GM12878 (cell line): ENCODE measurements at regions of chr3 and their contacts with region 1.

Region 1: GRCh38 chr3:186849374-186849975 is 7.0 kb downstream of the ADIPOQ start:
- DNase-seq: peak; percentile 30
- ATAC-seq: peak; percentile 97
- H3K4me3 ChIP-seq: no peak overlapping the region
- H3K27ac ChIP-seq: no peak overlapping the region
- H3K4me1 ChIP-seq: no peaks in the 10 kb centered on the region
- H3K27me3 ChIP-seq: peaks cover 0 to 7% of the 10 kb centered on the region in 2 experiments; a peak in 3 of 4 replicates
- CTCF ChIP-seq: peak; percentile 41 to 72 (median 56); a peak in 5 of 6 replicates
- EP300 ChIP-seq: no peak
- POLR2A ChIP-seq: no peak
- RAD21 ChIP-seq: peak; percentile 84

Region 2: GRCh38 chr3:186985661-186986364 is 136.3 kb after region 1 on chr3:
- CTCF ChIA-PET with region 1: interaction called, 7 read pairs
- POLR2A ChIA-PET with region 1: no interaction called
- RAD21 ChIA-PET with region 1: interaction called, 11 read pairs
- SMC1A ChIA-PET with region 1: interaction called, 5 read pairs
- in situ Hi-C with region 1: no loop called
- intact Hi-C with region 1: no loop called
- DNase-seq: peak; percentile 56
- ATAC-seq: peak; percentile 38
- H3K4me3 ChIP-seq: no peak overlapping the region; the same call in 1 of the 2 replicates
- H3K27ac ChIP-seq: peak overlapping the region; percentile 82
- H3K4me1 ChIP-seq: peaks cover 43% of the 10 kb centered on the region
- H3K27me3 ChIP-seq: no peaks in the 10 kb centered on the region
- CTCF ChIP-seq: no peak
- EP300 ChIP-seq: no peak
- POLR2A ChIP-seq: no peak
- RAD21 ChIP-seq: no peak

Region 3: GRCh38 chr3:187031934-187032333 is 182.5 kb after region 1 on chr3:
- CTCF ChIA-PET with region 1: interaction called, 11 read pairs
- POLR2A ChIA-PET with region 1: no interaction called
- RAD21 ChIA-PET with region 1: interaction called, 13 read pairs
- SMC1A ChIA-PET with region 1: interaction called, 21 read pairs
- in situ Hi-C with region 1: no loop called
- intact Hi-C with region 1: loop called (anchors 5 kb)
- DNase-seq: no peak
- ATAC-seq: peak; percentile 4; the same call in 2 of the 3 replicates
- H3K4me3 ChIP-seq: peak overlapping the region; percentile 47; the same call in 1 of the 2 replicates
- H3K27ac ChIP-seq: peak overlapping the region; percentile 57
- H3K4me1 ChIP-seq: peaks cover 43% of the 10 kb centered on the region
- H3K27me3 ChIP-seq: no peaks in the 10 kb centered on the region
- CTCF ChIP-seq: no peak
- EP300 ChIP-seq: no peak
- POLR2A ChIP-seq: 0 out of 2 replicates have a peak, but pooled peaks have one; percentile 16
- RAD21 ChIP-seq: no peak

Region 4: GRCh38 chr3:187073581-187074098 is 224.2 kb after region 1 on chr3:
- CTCF ChIA-PET with region 1: interaction called, 9 read pairs
- POLR2A ChIA-PET with region 1: no interaction called
- RAD21 ChIA-PET with region 1: interaction called, 4 read pairs
- SMC1A ChIA-PET with region 1: interaction called, 11 read pairs
- in situ Hi-C with region 1: no loop called
- intact Hi-C with region 1: no loop called
- DNase-seq: no peak
- ATAC-seq: no peak
- H3K4me3 ChIP-seq: no peak overlapping the region
- H3K27ac ChIP-seq: no peak overlapping the region
- H3K4me1 ChIP-seq: no peaks in the 10 kb centered on the region
- H3K27me3 ChIP-seq: no peaks in the 10 kb centered on the region
- CTCF ChIP-seq: no peak
- EP300 ChIP-seq: no peak
- POLR2A ChIP-seq: peak; percentile 43; the same call in 1 of the 2 replicates
- RAD21 ChIP-seq: no peak

Region 5: DNA sequence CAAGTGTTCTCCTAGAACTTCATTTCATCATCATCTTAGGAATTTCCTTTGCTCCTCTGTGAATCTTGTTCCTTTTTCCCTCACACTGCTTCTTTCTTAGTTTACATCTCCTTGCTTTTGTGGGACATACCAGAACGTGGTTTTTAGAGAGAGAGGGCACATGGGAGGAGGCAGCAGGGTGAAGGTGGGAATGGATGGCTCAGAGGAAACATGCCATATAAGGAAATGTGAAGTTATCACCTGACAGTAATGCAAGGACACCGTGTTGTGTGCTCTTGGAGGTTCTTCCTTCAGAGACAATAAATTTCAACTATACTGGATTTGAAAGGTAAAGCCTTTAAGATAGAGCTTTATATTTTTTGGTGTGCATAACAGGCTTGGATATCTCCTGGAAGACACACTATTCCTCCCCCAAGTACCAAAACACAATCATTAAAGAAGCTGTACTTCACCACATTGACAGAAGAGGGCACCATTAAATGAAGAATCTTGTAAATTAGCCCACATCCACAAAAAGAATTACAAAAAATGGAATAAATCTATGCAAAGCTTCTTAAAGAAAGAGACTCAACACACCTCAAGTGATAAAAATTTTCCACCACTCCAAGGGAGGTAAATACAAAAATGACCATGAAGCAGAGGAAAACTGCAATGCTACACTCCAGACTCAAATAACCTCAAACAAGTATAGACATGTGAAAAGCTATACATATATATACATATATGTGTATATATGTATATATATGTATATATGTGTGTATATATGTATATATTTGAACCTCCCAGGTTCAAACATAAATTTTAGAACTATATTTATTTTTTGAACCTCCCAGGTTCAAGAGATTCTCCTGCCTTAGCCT is 263.7 kb after region 1 on chr3:
- CTCF ChIA-PET with region 1: interaction called, 70 read pairs
- POLR2A ChIA-PET with region 1: no interaction called
- RAD21 ChIA-PET with region 1: interaction called, 22 read pairs
- SMC1A ChIA-PET with region 1: interaction called, 38 read pairs
- in situ Hi-C with region 1: no loop called
- intact Hi-C with region 1: loop called (anchors 1 kb)
- DNase-seq: no peak
- ATAC-seq: peak; percentile 71
- H3K4me3 ChIP-seq: no peak overlapping the region
- H3K27ac ChIP-seq: no peak overlapping the region
- H3K4me1 ChIP-seq: peaks cover 4% of the 10 kb centered on the region; the same call in 1 of the 2 replicates
- H3K27me3 ChIP-seq: no peaks in the 10 kb centered on the region
- CTCF ChIP-seq: peak; percentile 49 to 59 (median 49); a peak in 5 of 6 replicates
- EP300 ChIP-seq: 0 out of 4 replicates have a peak, but pooled peaks of 1 of the 2 experiments have one; percentile 16
- POLR2A ChIP-seq: no peak
- RAD21 ChIP-seq: peak; percentile 78

Region 6: GRCh38 chr3:187150599-187150998 is 301.1 kb after region 1 on chr3:
- CTCF ChIA-PET with region 1: interaction called, 92 read pairs
- POLR2A ChIA-PET with region 1: no interaction called
- RAD21 ChIA-PET with region 1: interaction called, 28 read pairs
- SMC1A ChIA-PET with region 1: interaction called, 44 read pairs
- in situ Hi-C with region 1: no loop called
- intact Hi-C with region 1: loop called (anchors 1 kb)
- DNase-seq: no peak
- ATAC-seq: peak; percentile 82
- H3K4me3 ChIP-seq: no peak overlapping the region
- H3K27ac ChIP-seq: no peak overlapping the region
- H3K4me1 ChIP-seq: no peaks in the 10 kb centered on the region; the same call in 1 of the 2 replicates
- H3K27me3 ChIP-seq: no peaks in the 10 kb centered on the region; a peak in 1 of 4 replicates
- CTCF ChIP-seq: peak; percentile 41 to 45 (median 43); a peak in 5 of 6 replicates
- EP300 ChIP-seq: no peak
- POLR2A ChIP-seq: no peak
- RAD21 ChIP-seq: peak; percentile 50

Region 7: DNA sequence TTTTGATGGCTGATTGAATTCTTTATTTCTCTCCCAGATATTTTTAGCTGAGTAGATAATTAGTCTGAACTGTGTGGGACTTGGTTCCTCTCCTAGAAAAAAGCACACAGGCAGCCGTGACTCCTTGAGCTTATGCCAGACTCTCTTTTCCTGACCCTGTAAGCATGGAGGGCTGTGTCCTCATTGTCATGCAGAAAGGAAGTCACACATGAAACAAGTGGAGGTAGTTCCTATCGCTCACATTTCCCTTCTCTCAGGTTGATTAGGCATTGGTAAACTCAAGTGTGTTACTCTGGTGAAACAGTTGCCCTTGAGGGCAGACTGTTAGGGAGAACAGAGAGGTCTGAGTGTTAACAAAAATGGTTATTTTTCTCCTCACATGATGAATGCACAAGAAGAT is 512.4 kb after region 1 on chr3:
- CTCF ChIA-PET with region 1: no interaction called
- POLR2A ChIA-PET with region 1: no interaction called
- RAD21 ChIA-PET with region 1: no interaction called
- SMC1A ChIA-PET with region 1: no interaction called
- in situ Hi-C with region 1: no loop called
- intact Hi-C with region 1: no loop called
- DNase-seq: no peak
- ATAC-seq: peak; percentile 24; the same call in 1 of the 3 replicates
- H3K4me3 ChIP-seq: no peak overlapping the region
- H3K27ac ChIP-seq: no peak overlapping the region
- H3K4me1 ChIP-seq: peaks cover 4% of the 10 kb centered on the region; the same call in 1 of the 2 replicates
- H3K27me3 ChIP-seq: no peaks in the 10 kb centered on the region
- CTCF ChIP-seq: no peak
- EP300 ChIP-seq: no peak
- POLR2A ChIP-seq: no peak
- RAD21 ChIP-seq: no peak